ENCODE measurements at regions of chr10 and their contacts with region 1.

Region 1: DNA sequence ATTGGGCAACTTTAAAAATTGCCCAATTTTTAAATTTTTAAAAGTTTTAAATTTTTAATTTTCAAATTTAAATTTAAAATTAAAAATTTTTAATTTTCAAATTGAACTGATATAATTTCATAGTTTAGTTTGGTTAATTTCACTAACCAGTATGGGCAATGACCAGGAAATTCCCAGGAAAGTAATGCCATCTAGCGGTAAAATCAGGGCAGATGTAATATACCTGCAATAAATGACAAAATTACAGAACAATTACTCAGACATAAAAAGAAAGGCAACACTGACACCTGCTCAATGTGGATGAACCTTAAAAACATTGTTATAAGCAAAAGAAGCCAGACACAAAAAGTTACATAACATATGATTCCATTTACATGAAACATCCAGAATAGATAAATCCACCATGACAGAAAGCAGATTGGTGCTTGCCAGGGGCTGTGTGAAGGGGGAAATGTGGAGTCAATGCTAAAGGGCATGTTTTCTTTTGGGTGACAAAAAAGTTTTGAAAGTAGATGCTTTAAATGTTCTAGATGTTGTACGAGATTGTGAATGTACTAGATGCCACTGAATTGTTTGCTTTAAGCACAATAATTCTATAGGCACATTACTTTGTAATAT is 28.6 kb upstream of the SLC16A12 start:
- DNase-seq: peak in 1 of 2 experiments; percentile 42
- H3K4me3 ChIP-seq: no peak overlapping the region
- H3K27ac ChIP-seq: no peak overlapping the region
- H3K4me1 ChIP-seq: no peaks in the 10 kb centered on the region
- H3K27me3 ChIP-seq: no peaks in the 10 kb centered on the region
- CTCF ChIP-seq: peak; percentile 69

Region 2: GRCh38 chr10:89207181-89207800 is 356.7 kb before region 1 on chr10 and contains the start of gene CH25H:
- CTCF ChIA-PET with region 1: no interaction called
- POLR2A ChIA-PET with region 1: no interaction called
- intact Hi-C with region 1: no loop called
- DNase-seq: peak in 1 of 2 experiments; percentile 15
- H3K4me3 ChIP-seq: no peak within 1 kb of the TSS; the same call in 1 of the 2 replicates
- H3K27ac ChIP-seq: no peak within 1 kb of the TSS
- H3K4me1 ChIP-seq: no peaks in the 10 kb centered on the region
- H3K27me3 ChIP-seq: no peaks in the 10 kb centered on the region
- CTCF ChIP-seq: no peak
- total RNA-seq, gene CH25H: not detected in 2 replicates

Region 3: GRCh38 chr10:89466599-89467035 is 97.4 kb before region 1 on chr10:
- CTCF ChIA-PET with region 1: interaction called, 6 read pairs
- POLR2A ChIA-PET with region 1: no interaction called
- intact Hi-C with region 1: loop called (anchors 1 kb)
- DNase-seq: peak; percentile 69 to 91
- H3K4me3 ChIP-seq: no peak overlapping the region
- H3K27ac ChIP-seq: peak overlapping the region; percentile 20; the same call in 1 of the 2 replicates
- H3K4me1 ChIP-seq: peaks cover 30% of the 10 kb centered on the region
- H3K27me3 ChIP-seq: no peaks in the 10 kb centered on the region
- CTCF ChIP-seq: peak; percentile 55

Region 4: DNA sequence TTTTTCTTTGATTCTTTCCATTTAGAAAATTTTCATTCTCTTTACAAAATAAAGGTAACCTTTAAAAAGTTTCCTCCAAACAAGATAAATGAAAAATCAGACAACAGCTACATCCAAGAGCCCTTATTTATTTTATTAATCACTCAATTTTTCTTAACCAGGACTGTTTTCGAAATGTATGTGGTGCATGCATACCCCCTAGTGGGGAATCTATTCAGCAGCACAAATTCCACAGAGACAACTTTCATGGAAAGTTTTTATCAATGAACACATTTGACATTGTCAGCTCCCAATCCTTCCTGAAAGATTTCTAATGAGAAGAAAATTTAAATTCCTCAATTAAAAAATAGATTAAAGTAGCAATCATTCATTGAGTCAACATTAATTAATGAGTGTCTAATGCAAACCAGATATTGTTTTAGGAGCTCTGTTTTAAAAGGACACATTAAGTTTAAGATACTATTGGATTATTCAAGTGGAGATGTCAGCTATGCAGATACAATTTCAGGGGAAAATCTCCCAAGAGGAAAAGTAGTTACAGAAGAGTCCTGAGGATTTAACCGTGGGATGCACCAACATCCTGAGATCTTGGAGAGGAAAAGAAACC is 1299.0 kb after region 1 on chr10:
- CTCF ChIA-PET with region 1: no interaction called
- POLR2A ChIA-PET with region 1: no interaction called
- intact Hi-C with region 1: loop called (anchors 10 kb)
- DNase-seq: no peak
- H3K4me3 ChIP-seq: no peak overlapping the region
- H3K27ac ChIP-seq: no peak overlapping the region
- H3K4me1 ChIP-seq: peaks cover 16% of the 10 kb centered on the region
- H3K27me3 ChIP-seq: no peaks in the 10 kb centered on the region
- CTCF ChIP-seq: peak; percentile 77